CD8-positive, alpha-beta T cell (primary cell): ENCODE measurements at regions of chr1 and their contacts with region 1.

Region 1: GRCh38 chr1:205211169-205211838 is at the start of gene DSTYK:
- DNase-seq: peak; percentile 83 to 96 (median 91)
- ATAC-seq: peak; percentile 92
- H3K4me3 ChIP-seq: peak within 1 kb of the TSS; percentile 55 to 93
- H3K4me3 Mint-ChIP-seq: peak within 1 kb of the TSS; percentile 96
- H3K27ac ChIP-seq: peak within 1 kb of the TSS; percentile 58 to 80
- H3K27ac Mint-ChIP-seq: peak within 1 kb of the TSS; percentile 98
- H3K4me1 ChIP-seq: peaks cover 15% of the 10 kb centered on the region
- H3K4me1 Mint-ChIP-seq: peaks cover 50% of the 10 kb centered on the region
- H3K27me3 ChIP-seq: no peaks in the 10 kb centered on the region
- H3K27me3 Mint-ChIP-seq: no peaks in the 10 kb centered on the region
- CTCF ChIP-seq: no peak
- total RNA-seq, gene DSTYK: 15.4 to 17.2 TPM

Region 2: GRCh38 chr1:204915861-204916495 is 295.3 kb before region 1 on chr1:
- CTCF ChIA-PET with region 1: no interaction called
- POLR2A ChIA-PET with region 1: no interaction called
- intact Hi-C with region 1: no loop called
- DNase-seq: no peak
- ATAC-seq: no peak
- H3K4me3 ChIP-seq: no peak overlapping the region
- H3K4me3 Mint-ChIP-seq: no peak overlapping the region
- H3K27ac ChIP-seq: no peak overlapping the region
- H3K27ac Mint-ChIP-seq: no peak overlapping the region
- H3K4me1 ChIP-seq: no peaks in the 10 kb centered on the region
- H3K4me1 Mint-ChIP-seq: no peaks in the 10 kb centered on the region
- H3K27me3 ChIP-seq: no peaks in the 10 kb centered on the region
- H3K27me3 Mint-ChIP-seq: peaks cover 22% of the 10 kb centered on the region
- CTCF ChIP-seq: no peak

Region 3: DNA sequence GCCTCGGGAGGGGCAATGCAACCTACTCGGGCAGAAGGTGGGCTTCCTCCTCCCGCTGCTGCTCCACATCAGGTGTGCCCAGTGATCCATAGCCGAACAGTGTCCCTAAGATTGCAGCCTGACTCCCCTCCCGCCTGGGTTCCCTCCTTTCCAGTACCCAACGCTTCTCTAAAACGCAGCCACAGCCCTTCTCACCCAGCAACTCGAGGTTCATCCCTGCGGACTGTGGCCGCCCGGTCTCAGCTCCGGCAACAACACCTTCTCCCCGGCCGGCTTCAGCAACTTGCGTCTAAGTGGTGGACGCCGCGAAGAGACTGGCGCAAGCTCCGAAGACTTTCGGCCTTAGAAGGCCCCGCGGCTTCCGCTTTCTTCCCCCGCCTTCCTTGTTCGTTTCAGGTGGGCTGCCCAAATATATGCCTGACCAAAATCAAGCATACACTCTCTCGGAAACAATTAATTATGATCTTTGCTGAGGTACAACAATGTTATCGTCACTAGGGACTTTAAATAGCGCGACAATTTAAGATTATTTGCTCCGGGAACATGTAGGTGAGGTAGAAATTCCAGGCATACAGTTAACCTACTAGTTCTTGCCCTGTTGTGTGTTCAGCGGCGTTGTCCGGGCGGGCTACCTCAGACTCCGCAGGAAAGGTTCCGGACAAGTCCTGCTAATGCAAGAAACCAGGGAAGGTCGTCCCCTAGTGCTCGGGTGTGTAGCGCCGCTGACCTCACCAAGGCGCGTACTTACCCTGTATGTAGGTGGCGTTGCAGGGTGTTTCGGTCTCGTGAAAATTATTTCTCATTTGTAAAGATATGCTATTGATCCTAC is 89.4 kb before region 1 on chr1 and contains the start of gene RBBP5:
- CTCF ChIA-PET with region 1: no interaction called
- POLR2A ChIA-PET with region 1: interaction called, 3 read pairs
- intact Hi-C with region 1: loop called (anchors 1 kb)
- DNase-seq: peak; percentile 92 to 98 (median 95)
- ATAC-seq: peak; percentile 93
- H3K4me3 ChIP-seq: peak within 1 kb of the TSS; percentile 91 to 95
- H3K4me3 Mint-ChIP-seq: peak within 1 kb of the TSS; percentile 96
- H3K27ac ChIP-seq: peak within 1 kb of the TSS; percentile 88 to 97
- H3K27ac Mint-ChIP-seq: peak within 1 kb of the TSS; percentile 100
- H3K4me1 ChIP-seq: peaks cover 26% of the 10 kb centered on the region
- H3K4me1 Mint-ChIP-seq: peaks cover 46% of the 10 kb centered on the region
- H3K27me3 ChIP-seq: no peaks in the 10 kb centered on the region
- H3K27me3 Mint-ChIP-seq: no peaks in the 10 kb centered on the region
- CTCF ChIP-seq: peak; percentile 59
- total RNA-seq, gene RBBP5: 23.9 to 25.7 TPM

Region 4: DNA sequence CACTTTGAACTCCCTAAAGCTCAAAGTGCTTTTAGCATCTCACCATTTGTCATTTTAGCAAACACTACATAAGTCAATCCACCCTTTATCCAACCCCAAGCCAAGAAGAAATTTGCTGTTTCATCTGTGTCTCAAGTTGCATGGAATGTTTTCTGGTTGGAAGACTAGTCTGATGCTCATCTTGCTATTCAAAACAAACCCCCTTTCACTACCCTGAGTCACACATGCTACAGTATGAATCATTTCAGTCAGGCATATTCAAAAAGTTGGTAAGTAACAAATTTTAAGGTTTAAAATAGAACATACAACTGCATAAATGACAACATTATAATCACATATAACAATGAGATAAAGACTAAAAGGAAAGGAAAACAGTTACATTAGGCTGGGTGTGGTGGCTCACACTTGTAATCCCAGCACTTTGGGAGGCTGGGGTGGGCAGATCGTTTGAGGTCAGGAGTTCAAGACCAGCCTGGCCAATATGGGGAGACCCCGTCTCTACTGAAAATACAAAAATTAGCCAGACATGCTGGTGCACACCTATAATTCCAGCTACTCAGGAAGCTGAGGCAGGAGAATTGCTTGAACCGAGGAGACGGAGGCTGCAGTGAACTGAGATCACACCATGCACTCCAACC is 38.5 kb before region 1 on chr1:
- CTCF ChIA-PET with region 1: no interaction called
- POLR2A ChIA-PET with region 1: interaction called, 4 read pairs
- intact Hi-C with region 1: loop called in 1 of 2 experiments (anchors 5 kb)
- DNase-seq: no peak
- ATAC-seq: no peak
- H3K4me3 ChIP-seq: no peak overlapping the region
- H3K4me3 Mint-ChIP-seq: no peak overlapping the region
- H3K27ac ChIP-seq: no peak overlapping the region
- H3K27ac Mint-ChIP-seq: no peak overlapping the region
- H3K4me1 ChIP-seq: peaks cover 15% of the 10 kb centered on the region
- H3K4me1 Mint-ChIP-seq: peaks cover 19% of the 10 kb centered on the region
- H3K27me3 ChIP-seq: no peaks in the 10 kb centered on the region
- H3K27me3 Mint-ChIP-seq: no peaks in the 10 kb centered on the region
- CTCF ChIP-seq: no peak